CD4-positive, alpha-beta T cell (primary cell): ENCODE measurements at regions of chr7 and their contacts with region 1.

Region 1: DNA sequence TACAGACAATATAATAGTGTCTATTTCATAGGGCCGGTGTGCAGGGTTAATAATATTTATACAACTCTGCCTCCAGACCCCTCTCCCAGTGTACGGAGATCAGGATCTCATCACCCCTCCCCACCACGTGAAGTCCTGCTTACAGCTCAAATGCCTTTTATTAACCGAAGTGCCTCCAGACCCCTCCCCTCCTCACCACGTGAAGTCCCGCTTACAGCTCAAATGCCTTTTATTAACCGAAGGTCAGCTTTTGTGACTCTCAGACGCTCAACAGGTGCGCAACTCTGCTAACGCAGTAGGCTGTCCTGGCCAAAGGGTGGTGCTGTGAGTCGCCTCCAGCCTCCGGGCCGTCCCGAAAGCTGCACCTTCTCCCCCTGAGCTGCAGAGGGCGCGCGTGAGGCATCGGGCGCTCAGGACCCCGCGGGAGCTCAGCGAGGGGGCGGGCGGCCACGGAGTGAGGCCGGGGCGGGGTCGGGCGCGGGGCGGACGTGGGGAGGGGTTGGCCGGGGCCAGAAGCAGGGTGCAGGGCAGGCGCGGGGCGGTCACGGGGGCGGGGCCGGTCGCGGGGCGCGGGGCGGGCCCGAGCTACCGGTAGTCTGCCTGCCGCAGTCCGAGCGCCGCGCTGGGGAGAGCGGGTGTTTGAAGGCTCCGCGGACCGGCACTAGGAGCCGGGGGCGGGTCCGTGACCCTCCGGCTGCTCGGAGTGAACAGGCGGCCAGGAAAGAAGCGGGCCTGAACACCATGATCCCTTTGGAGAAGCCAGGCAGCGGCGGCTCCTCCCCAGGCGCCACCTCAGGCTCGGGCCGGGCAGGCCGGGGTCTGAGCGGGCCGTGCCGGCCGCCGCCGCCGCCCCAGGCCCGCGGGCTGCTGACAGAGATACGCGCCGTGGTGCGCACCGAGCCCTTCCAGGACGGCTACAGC is at the start of gene STK17A:
- DNase-seq: peak; percentile 86 to 98 (median 94)
- ATAC-seq: peak; percentile 71
- H3K4me3 ChIP-seq: peak within 1 kb of the TSS; percentile 77
- H3K4me3 Mint-ChIP-seq: peak within 1 kb of the TSS; percentile 95
- H3K27ac ChIP-seq: peak within 1 kb of the TSS; percentile 87 to 97
- H3K27ac Mint-ChIP-seq: peak within 1 kb of the TSS; percentile 98
- H3K4me1 ChIP-seq: peaks cover 10% of the 10 kb centered on the region
- H3K4me1 Mint-ChIP-seq: peaks cover 38% of the 10 kb centered on the region
- H3K27me3 ChIP-seq: no peaks in the 10 kb centered on the region
- H3K27me3 Mint-ChIP-seq: peaks cover 21% of the 10 kb centered on the region
- CTCF ChIP-seq: peak; percentile 85
- total RNA-seq, gene STK17A: 213 to 218 TPM

Region 2: GRCh38 chr7:43572516-43573049 is 10.2 kb before region 1 on chr7:
- CTCF ChIA-PET with region 1: interaction called, 17 read pairs
- POLR2A ChIA-PET with region 1: interaction called, 6 read pairs
- intact Hi-C with region 1: no loop called
- DNase-seq: peak in 6 of 14 experiments; percentile 12 to 74 (median 42)
- ATAC-seq: peak; percentile 74
- H3K4me3 ChIP-seq: no peak overlapping the region
- H3K4me3 Mint-ChIP-seq: no peak overlapping the region
- H3K27ac ChIP-seq: no peak overlapping the region
- H3K27ac Mint-ChIP-seq: no peak overlapping the region
- H3K4me1 ChIP-seq: no peaks in the 10 kb centered on the region
- H3K4me1 Mint-ChIP-seq: peaks cover 5% of the 10 kb centered on the region
- H3K27me3 ChIP-seq: no peaks in the 10 kb centered on the region
- H3K27me3 Mint-ChIP-seq: no peaks in the 10 kb centered on the region
- CTCF ChIP-seq: no peak

Region 3: DNA sequence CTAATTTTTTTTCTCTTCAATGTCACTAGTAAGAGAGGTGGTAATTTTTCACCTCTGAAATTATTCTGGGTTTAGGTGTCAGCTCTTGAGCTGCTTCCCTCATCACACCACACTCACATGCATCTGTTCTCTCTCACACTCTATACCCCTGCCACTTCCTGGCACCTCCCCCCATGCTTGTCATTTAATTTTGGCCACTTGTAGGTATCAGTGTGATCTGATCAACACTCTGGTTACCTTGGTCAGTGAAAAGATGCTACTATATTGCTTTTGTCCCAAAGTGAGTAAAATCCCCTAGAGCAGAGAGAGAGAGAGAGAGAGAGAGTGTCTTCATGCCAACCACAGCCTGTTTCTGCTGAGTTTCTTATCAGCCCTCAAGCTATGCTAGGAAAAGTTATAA is 42.7 kb after region 1 on chr7:
- CTCF ChIA-PET with region 1: interaction called, 58 read pairs
- POLR2A ChIA-PET with region 1: interaction called, 27 read pairs
- intact Hi-C with region 1: loop called in 1 of 2 experiments (anchors 5 kb)
- DNase-seq: peak in 8 of 14 experiments; percentile 27 to 85 (median 52)
- ATAC-seq: peak; percentile 69
- H3K4me3 ChIP-seq: no peak overlapping the region
- H3K4me3 Mint-ChIP-seq: peak overlapping the region; percentile 59
- H3K27ac ChIP-seq: peak overlapping the region; percentile 35 to 45
- H3K27ac Mint-ChIP-seq: no peak overlapping the region
- H3K4me1 ChIP-seq: peaks cover 35% of the 10 kb centered on the region
- H3K4me1 Mint-ChIP-seq: peaks cover 97% of the 10 kb centered on the region
- H3K27me3 ChIP-seq: no peaks in the 10 kb centered on the region
- H3K27me3 Mint-ChIP-seq: no peaks in the 10 kb centered on the region
- CTCF ChIP-seq: no peak

Region 4: GRCh38 chr7:43647673-43648472 is 65.1 kb after region 1 on chr7:
- CTCF ChIA-PET with region 1: interaction called, 167 read pairs
- POLR2A ChIA-PET with region 1: interaction called, 300 read pairs
- intact Hi-C with region 1: loop called (anchors 1 to 5 kb)
- DNase-seq: peak in 9 of 14 experiments; percentile 32 to 69 (median 50)
- ATAC-seq: peak; percentile 16
- H3K4me3 ChIP-seq: peak overlapping the region; percentile 56
- H3K4me3 Mint-ChIP-seq: peak overlapping the region; percentile 76
- H3K27ac ChIP-seq: peak overlapping the region; percentile 75 to 96
- H3K27ac Mint-ChIP-seq: peak overlapping the region; percentile 87
- H3K4me1 ChIP-seq: peaks cover 97% of the 10 kb centered on the region
- H3K4me1 Mint-ChIP-seq: peaks cover 95% of the 10 kb centered on the region
- H3K27me3 ChIP-seq: no peaks in the 10 kb centered on the region
- H3K27me3 Mint-ChIP-seq: no peaks in the 10 kb centered on the region
- CTCF ChIP-seq: no peak

Region 5: GRCh38 chr7:43693687-43694398 is 111.1 kb after region 1 on chr7:
- CTCF ChIA-PET with region 1: interaction called, 323 read pairs
- POLR2A ChIA-PET with region 1: interaction called, 254 read pairs
- intact Hi-C with region 1: no loop called
- DNase-seq: no peak
- ATAC-seq: no peak
- H3K4me3 ChIP-seq: no peak overlapping the region
- H3K4me3 Mint-ChIP-seq: no peak overlapping the region
- H3K27ac ChIP-seq: no peak overlapping the region
- H3K27ac Mint-ChIP-seq: no peak overlapping the region
- H3K4me1 ChIP-seq: peaks cover 17% of the 10 kb centered on the region
- H3K4me1 Mint-ChIP-seq: peaks cover 47% of the 10 kb centered on the region
- H3K27me3 ChIP-seq: no peaks in the 10 kb centered on the region
- H3K27me3 Mint-ChIP-seq: no peaks in the 10 kb centered on the region
- CTCF ChIP-seq: no peak

Region 6: GRCh38 chr7:43721193-43721806 is 138.5 kb after region 1 on chr7:
- CTCF ChIA-PET with region 1: interaction called, 46 read pairs
- POLR2A ChIA-PET with region 1: interaction called, 12 read pairs
- intact Hi-C with region 1: loop called (anchors 1 kb)
- DNase-seq: peak in 4 of 14 experiments; percentile 25 to 78 (median 74)
- ATAC-seq: peak; percentile 48
- H3K4me3 ChIP-seq: no peak overlapping the region
- H3K4me3 Mint-ChIP-seq: no peak overlapping the region
- H3K27ac ChIP-seq: no peak overlapping the region
- H3K27ac Mint-ChIP-seq: peak overlapping the region; percentile 0
- H3K4me1 ChIP-seq: peaks cover 8% of the 10 kb centered on the region
- H3K4me1 Mint-ChIP-seq: peaks cover 71% of the 10 kb centered on the region
- H3K27me3 ChIP-seq: no peaks in the 10 kb centered on the region
- H3K27me3 Mint-ChIP-seq: no peaks in the 10 kb centered on the region
- CTCF ChIP-seq: peak; percentile 96